ENCODE measurements at regions of chr5 and their contacts with region 1.

Region 1: GRCh38 chr5:18761801-18762200 is 1127.5 kb downstream of the TAF11L14 start:
- DNase-seq: no peak
- H3K4me3 Mint-ChIP-seq: no peak overlapping the region
- H3K27ac Mint-ChIP-seq: no peak overlapping the region
- H3K4me1 Mint-ChIP-seq: peaks cover 3% of the 10 kb centered on the region
- H3K27me3 Mint-ChIP-seq: peaks cover 4% of the 10 kb centered on the region

Region 2: GRCh38 chr5:17813214-17813613 is 948.6 kb before region 1 on chr5:
- intact Hi-C with region 1: loop called (anchors 10 kb)
- DNase-seq: no peak
- H3K4me3 Mint-ChIP-seq: no peak overlapping the region
- H3K27ac Mint-ChIP-seq: no peak overlapping the region
- H3K4me1 Mint-ChIP-seq: no peaks in the 10 kb centered on the region
- H3K27me3 Mint-ChIP-seq: no peaks in the 10 kb centered on the region

Region 3: GRCh38 chr5:18404039-18404438 is 357.8 kb before region 1 on chr5:
- intact Hi-C with region 1: no loop called
- DNase-seq: no peak
- H3K4me3 Mint-ChIP-seq: no peak overlapping the region
- H3K27ac Mint-ChIP-seq: no peak overlapping the region
- H3K4me1 Mint-ChIP-seq: no peaks in the 10 kb centered on the region
- H3K27me3 Mint-ChIP-seq: no peaks in the 10 kb centered on the region

Region 4: GRCh38 chr5:18745646-18746615 is 15.9 kb before region 1 on chr5:
- intact Hi-C with region 1: loop called (anchors 1 kb)
- DNase-seq: peak; percentile 85
- H3K4me3 Mint-ChIP-seq: peak overlapping the region; percentile 87
- H3K27ac Mint-ChIP-seq: peak overlapping the region; percentile 87
- H3K4me1 Mint-ChIP-seq: peaks cover 55% of the 10 kb centered on the region
- H3K27me3 Mint-ChIP-seq: no peaks in the 10 kb centered on the region

Region 5: DNA sequence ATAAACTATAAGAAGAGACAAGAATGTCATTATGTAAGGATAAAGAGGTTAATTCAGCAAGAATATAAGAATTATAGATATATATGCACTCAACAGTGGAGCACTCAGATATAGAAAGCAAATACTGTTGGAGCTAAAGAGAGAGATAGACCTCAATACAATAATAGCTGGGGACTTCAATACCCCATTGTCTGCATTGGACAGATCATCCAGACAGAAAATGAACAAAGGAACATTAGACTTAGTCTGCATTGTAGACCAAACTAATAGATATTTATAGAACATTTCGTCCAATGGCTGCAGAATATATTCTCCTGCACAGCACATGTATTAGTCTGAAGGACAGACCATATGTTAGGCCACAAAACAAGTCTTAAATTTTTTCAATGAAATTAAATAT is 449.1 kb after region 1 on chr5:
- intact Hi-C with region 1: loop called (anchors 10 kb)
- DNase-seq: no peak
- H3K4me3 Mint-ChIP-seq: no peak overlapping the region
- H3K27ac Mint-ChIP-seq: no peak overlapping the region
- H3K4me1 Mint-ChIP-seq: no peaks in the 10 kb centered on the region
- H3K27me3 Mint-ChIP-seq: no peaks in the 10 kb centered on the region

Measured in activated CD4-positive, alpha-beta T cell treated with anti-CD3 and anti-CD28 coated beads, Interleukin-2, amount 10 ng/mL, durations not matched to agents 24 days and 14 days (primary cell).